ENCODE measurements at regions of chr16 and their contacts with region 1.

Region 1: GRCh38 chr16:68229431-68230198 is 6.3 kb downstream of the ESRP2 start:
- DNase-seq: no peak
- H3K4me3 ChIP-seq: no peak overlapping the region
- H3K27me3 ChIP-seq: no peaks in the 10 kb centered on the region
- CTCF ChIP-seq: peak; percentile 93

Region 2: DNA sequence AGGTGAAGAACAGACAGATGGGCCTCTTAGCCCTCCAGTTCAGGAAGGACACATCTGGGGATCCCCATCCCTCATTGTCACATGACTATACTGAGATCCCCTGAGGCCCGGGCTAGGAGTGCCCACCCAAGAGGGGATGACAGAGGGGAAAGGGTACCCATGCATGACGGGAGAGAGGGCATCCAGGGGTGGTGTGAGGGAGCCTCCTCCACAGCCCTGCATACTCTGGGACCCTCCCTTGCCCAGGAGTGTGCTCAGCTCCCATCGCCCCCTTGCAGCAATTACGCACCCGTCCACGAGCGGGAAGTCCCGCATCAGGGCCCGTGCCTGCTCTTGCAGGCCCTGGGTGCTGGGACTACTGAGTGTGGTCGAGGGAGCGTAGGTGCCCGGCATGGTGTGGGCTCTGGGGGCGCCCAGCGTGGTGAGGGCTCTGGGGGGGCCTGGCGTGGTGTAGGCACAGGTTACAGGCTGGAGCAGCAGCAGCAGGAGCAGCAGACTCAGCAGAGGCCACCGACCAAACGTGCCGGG is 236.9 kb before region 1 on chr16:
- CTCF ChIA-PET with region 1: interaction called, 18 read pairs
- POLR2A ChIA-PET with region 1: no interaction called
- DNase-seq: no peak
- H3K4me3 ChIP-seq: no peak overlapping the region
- H3K27me3 ChIP-seq: no peaks in the 10 kb centered on the region
- CTCF ChIP-seq: no peak

Region 3: GRCh38 chr16:68093816-68094613 is 135.6 kb before region 1 on chr16:
- CTCF ChIA-PET with region 1: interaction called, 61 read pairs
- POLR2A ChIA-PET with region 1: no interaction called
- DNase-seq: no peak
- H3K4me3 ChIP-seq: no peak overlapping the region
- H3K27me3 ChIP-seq: no peaks in the 10 kb centered on the region
- CTCF ChIP-seq: peak; percentile 62

Region 4: GRCh38 chr16:68217506-68217905 is 12.1 kb before region 1 on chr16:
- CTCF ChIA-PET with region 1: interaction called, 12 read pairs
- POLR2A ChIA-PET with region 1: no interaction called
- DNase-seq: no peak
- H3K4me3 ChIP-seq: no peak overlapping the region
- H3K27me3 ChIP-seq: no peaks in the 10 kb centered on the region
- CTCF ChIP-seq: no peak